ENCODE measurements at regions of chr3 and their contacts with region 1.

Region 1: GRCh38 chr3:192467230-192468140 is 259.9 kb downstream of the FGF12 start:
- DNase-seq: peak; percentile 70
- ATAC-seq: peak; percentile 73
- H3K4me3 ChIP-seq: no peak overlapping the region
- H3K4me3 Mint-ChIP-seq: no peak overlapping the region
- H3K27ac ChIP-seq: no peak overlapping the region
- H3K27ac Mint-ChIP-seq: no peak overlapping the region
- H3K4me1 ChIP-seq: no peaks in the 10 kb centered on the region
- H3K4me1 Mint-ChIP-seq: no peaks in the 10 kb centered on the region
- H3K27me3 ChIP-seq: peaks cover 0 to 10% (median 2%) of the 10 kb centered on the region in 4 experiments
- H3K27me3 Mint-ChIP-seq: peaks cover 40% of the 10 kb centered on the region
- CTCF ChIP-seq: peak; percentile 99

Region 2: DNA sequence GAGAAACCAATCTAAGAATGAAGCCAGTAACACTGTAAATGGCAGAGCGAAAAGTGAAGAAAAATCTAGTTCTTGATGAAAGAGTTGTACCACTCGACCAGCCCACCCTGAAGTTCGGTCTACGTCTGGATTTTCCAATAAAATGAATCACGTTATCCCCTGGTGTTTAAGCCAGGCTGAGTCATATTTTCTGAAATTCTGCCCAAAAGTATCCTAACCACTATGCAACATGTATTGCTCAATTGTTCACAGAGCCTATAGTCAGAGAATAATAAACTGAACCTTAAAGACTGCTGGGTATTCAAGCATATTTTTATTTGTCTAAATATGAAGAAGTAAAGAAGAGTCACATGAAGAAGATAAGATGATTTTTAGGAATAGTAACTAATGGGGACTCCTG is 14.2 kb after region 1 on chr3:
- CTCF ChIA-PET with region 1: interaction called, 16 read pairs
- POLR2A ChIA-PET with region 1: no interaction called
- intact Hi-C with region 1: no loop called
- DNase-seq: no peak
- ATAC-seq: no peak
- H3K4me3 ChIP-seq: no peak overlapping the region
- H3K4me3 Mint-ChIP-seq: no peak overlapping the region
- H3K27ac ChIP-seq: no peak overlapping the region
- H3K27ac Mint-ChIP-seq: no peak overlapping the region
- H3K4me1 ChIP-seq: no peaks in the 10 kb centered on the region
- H3K4me1 Mint-ChIP-seq: peaks cover 2% of the 10 kb centered on the region
- H3K27me3 ChIP-seq: peaks cover 0 to 8% (median 0%) of the 10 kb centered on the region in 4 experiments
- H3K27me3 Mint-ChIP-seq: peaks cover 28% of the 10 kb centered on the region
- CTCF ChIP-seq: no peak

Region 3: DNA sequence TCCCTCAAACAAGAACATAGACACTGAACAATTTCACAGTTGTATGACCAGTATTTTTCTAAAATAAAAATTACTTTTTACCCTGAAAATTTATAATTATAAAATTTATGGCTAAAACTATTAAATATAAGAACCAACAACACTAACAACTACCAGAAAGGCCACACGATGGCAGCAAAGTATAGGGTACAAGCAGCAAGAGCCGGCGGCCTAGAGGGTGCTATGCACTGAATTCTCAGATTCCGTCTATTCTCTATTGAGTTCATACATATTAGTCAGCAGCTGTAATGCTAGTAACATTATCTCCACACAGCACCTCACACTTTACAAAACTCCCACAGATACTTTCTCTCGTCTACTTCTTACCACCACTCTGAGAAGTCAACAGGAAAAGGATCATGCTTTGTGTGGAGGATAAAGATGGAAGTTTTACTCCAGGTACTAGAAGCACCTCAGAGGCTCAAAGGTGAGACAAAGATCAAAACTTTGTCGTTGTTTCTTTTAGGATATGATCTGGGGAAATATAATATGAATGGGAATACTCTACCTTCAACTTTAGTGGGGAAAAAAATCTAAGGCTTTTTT is 99.3 kb after region 1 on chr3:
- CTCF ChIA-PET with region 1: no interaction called
- POLR2A ChIA-PET with region 1: no interaction called
- intact Hi-C with region 1: loop called (anchors 10 kb)
- DNase-seq: peak; percentile 60
- ATAC-seq: peak; percentile 45
- H3K4me3 ChIP-seq: no peak overlapping the region
- H3K4me3 Mint-ChIP-seq: no peak overlapping the region
- H3K27ac ChIP-seq: no peak overlapping the region
- H3K27ac Mint-ChIP-seq: no peak overlapping the region
- H3K4me1 ChIP-seq: peaks cover 8 to 9% of the 10 kb centered on the region in 2 donors
- H3K4me1 Mint-ChIP-seq: peaks cover 9% of the 10 kb centered on the region
- H3K27me3 ChIP-seq: peaks cover 0 to 12% (median 7%) of the 10 kb centered on the region in 4 experiments
- H3K27me3 Mint-ChIP-seq: peaks cover 24% of the 10 kb centered on the region
- CTCF ChIP-seq: peak; percentile 80

Region 4: DNA sequence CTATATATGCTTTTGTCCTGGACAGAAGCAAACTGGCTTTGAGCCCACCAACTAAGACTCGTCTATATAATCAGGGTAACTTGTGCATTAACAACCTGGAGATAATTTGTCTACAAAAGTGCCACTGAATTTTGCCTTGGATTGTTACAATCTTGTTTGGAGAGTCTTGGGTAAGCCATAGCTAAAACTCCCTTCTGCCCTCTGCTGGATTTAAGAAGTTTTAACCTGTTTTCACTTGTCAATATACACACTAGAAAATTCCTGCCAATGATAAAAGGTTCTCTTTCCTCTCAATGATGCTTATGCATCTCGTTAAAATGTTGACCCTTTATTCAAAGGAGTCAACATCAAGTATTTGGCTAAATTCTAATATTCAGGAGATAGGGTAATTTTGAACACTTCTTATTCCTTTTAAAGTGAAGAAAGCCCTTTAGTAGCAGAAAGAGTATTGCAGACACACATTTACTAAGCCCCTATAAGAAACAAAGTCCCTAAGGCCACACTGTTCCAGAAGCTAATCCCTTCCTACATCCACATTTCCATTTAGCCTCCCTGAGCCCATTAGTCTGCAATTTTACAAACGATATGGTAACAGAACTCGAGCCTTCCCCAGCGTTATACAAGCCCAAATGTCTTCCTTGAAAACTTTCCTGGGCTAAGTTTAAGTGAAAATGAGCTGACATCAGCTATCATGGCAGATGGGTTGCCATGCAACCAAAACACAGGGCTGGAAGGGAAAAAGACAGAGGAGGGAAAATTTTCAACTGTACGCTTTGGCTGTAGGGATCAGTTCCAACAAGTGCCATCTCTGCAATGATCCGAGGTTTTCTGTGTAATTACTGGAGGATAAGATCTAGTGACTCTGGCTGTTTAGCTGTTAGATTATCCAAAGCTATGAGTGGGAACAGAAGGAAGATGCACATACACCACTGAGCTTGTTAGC is 335.7 kb after region 1 on chr3:
- CTCF ChIA-PET with region 1: interaction called, 19 read pairs
- POLR2A ChIA-PET with region 1: no interaction called
- intact Hi-C with region 1: no loop called
- DNase-seq: peak; percentile 47
- ATAC-seq: no peak
- H3K4me3 ChIP-seq: no peak overlapping the region
- H3K4me3 Mint-ChIP-seq: no peak overlapping the region
- H3K27ac ChIP-seq: no peak overlapping the region
- H3K27ac Mint-ChIP-seq: no peak overlapping the region
- H3K4me1 ChIP-seq: no peaks in the 10 kb centered on the region
- H3K4me1 Mint-ChIP-seq: no peaks in the 10 kb centered on the region
- H3K27me3 ChIP-seq: no peaks in the 10 kb centered on the region
- H3K27me3 Mint-ChIP-seq: peaks cover 18% of the 10 kb centered on the region
- CTCF ChIP-seq: peak; percentile 60

Region 5: DNA sequence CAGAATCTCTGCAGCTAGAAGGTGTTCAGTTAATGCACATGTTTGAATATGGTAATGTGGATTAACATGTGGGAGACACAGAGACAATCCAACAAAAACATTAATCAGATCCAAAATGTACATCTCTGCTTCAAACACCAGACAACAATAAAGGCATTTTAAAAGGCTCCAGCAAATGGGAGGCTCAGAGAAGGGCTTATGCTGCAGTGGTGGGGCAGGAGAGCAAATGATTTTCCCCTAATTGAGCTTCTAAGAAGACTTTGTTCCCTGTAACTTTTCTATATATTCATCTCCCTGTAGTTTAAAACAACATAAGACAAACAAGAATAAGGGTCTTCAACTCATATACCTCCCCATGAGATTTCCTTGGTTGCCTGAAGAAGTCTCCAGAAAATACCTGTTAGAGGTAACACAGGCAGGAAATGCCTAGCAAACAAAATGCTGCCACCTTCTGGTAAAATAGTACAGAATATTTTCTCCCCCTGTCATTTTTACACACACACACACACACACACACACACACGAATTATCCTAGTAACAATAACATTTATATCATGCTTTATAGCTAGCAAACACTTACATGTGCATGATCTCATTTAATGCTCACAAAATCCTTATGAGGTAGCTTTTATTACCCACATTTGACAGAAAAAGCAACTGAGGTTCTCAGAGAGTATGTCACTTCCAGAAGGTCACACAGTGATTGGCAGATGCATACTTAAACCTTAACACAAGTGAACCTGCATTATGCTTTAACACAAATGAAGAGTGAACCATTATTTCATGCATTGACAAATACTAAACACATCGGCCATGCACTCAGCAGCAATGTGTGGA is 573.6 kb after region 1 on chr3:
- CTCF ChIA-PET with region 1: interaction called, 16 read pairs
- POLR2A ChIA-PET with region 1: no interaction called
- intact Hi-C with region 1: no loop called
- DNase-seq: peak; percentile 24
- ATAC-seq: no peak
- H3K4me3 ChIP-seq: no peak overlapping the region
- H3K4me3 Mint-ChIP-seq: no peak overlapping the region
- H3K27ac ChIP-seq: no peak overlapping the region
- H3K27ac Mint-ChIP-seq: no peak overlapping the region
- H3K4me1 ChIP-seq: no peaks in the 10 kb centered on the region
- H3K4me1 Mint-ChIP-seq: no peaks in the 10 kb centered on the region
- H3K27me3 ChIP-seq: no peaks in the 10 kb centered on the region
- H3K27me3 Mint-ChIP-seq: no peaks in the 10 kb centered on the region
- CTCF ChIP-seq: peak; percentile 24

Region 6: GRCh38 chr3:193605876-193606275 is 1138.4 kb after region 1 on chr3:
- CTCF ChIA-PET with region 1: interaction called, 3 read pairs
- POLR2A ChIA-PET with region 1: no interaction called
- intact Hi-C with region 1: loop called (anchors 10 kb)
- DNase-seq: peak; percentile 69
- ATAC-seq: peak; percentile 61
- H3K4me3 ChIP-seq: no peak overlapping the region
- H3K4me3 Mint-ChIP-seq: no peak overlapping the region
- H3K27ac ChIP-seq: no peak overlapping the region
- H3K27ac Mint-ChIP-seq: no peak overlapping the region
- H3K4me1 ChIP-seq: no peaks in the 10 kb centered on the region
- H3K4me1 Mint-ChIP-seq: peaks cover 35% of the 10 kb centered on the region
- H3K27me3 ChIP-seq: no peaks in the 10 kb centered on the region
- H3K27me3 Mint-ChIP-seq: no peaks in the 10 kb centered on the region
- CTCF ChIP-seq: peak; percentile 92

Region 7: DNA sequence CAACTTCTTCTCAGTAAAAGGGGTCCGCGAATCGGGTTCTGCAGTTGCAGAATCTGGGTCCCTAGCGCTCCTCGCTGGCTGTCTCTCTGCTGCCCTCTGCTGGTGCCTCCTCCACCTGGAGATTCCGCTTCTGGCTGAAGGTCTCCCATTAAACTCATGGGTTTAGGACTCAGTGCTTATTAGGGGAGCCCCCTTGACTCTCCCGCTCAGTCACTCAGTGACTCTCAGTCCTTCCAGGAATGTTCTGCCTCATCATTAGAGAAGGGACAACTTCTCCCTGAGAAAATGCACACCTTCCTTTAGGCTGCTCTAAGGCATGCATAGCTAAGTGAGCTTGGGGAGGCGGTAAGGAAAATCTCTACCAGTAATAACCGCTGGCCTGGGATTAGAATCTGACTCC is 1876.5 kb after region 1 on chr3:
- CTCF ChIA-PET with region 1: interaction called, 3 read pairs
- POLR2A ChIA-PET with region 1: no interaction called
- intact Hi-C with region 1: loop called (anchors 5 kb)
- DNase-seq: peak; percentile 78
- ATAC-seq: peak; percentile 61
- H3K4me3 ChIP-seq: no peak overlapping the region
- H3K4me3 Mint-ChIP-seq: no peak overlapping the region
- H3K27ac ChIP-seq: no peak overlapping the region
- H3K27ac Mint-ChIP-seq: no peak overlapping the region
- H3K4me1 ChIP-seq: peaks cover 0 to 3% of the 10 kb centered on the region in 2 donors
- H3K4me1 Mint-ChIP-seq: peaks cover 8% of the 10 kb centered on the region
- H3K27me3 ChIP-seq: peaks cover 0 to 17% (median 0%) of the 10 kb centered on the region in 4 experiments
- H3K27me3 Mint-ChIP-seq: peaks cover 25% of the 10 kb centered on the region
- CTCF ChIP-seq: peak; percentile 98